ENCODE measurements at regions of chr19 and their contacts with region 1.

Region 1: GRCh38 chr19:47514869-47515588 is at the start of gene NAPA:
- DNase-seq: peak; percentile 100
- ATAC-seq: peak; percentile 84 to 91
- H3K4me3 ChIP-seq: peak within 1 kb of the TSS; percentile 83 to 98 (median 95)
- H3K27ac ChIP-seq: peak within 1 kb of the TSS; percentile 96 to 100 (median 99)
- H3K4me1 ChIP-seq: peaks cover 43 to 48% of the 10 kb centered on the region in 2 donors
- H3K27me3 ChIP-seq: no peaks in the 10 kb centered on the region
- CTCF ChIP-seq: no peak
- POLR2A ChIP-seq: peak; percentile 99 to 100
- total RNA-seq, gene NAPA: 127 to 272 (median 212) TPM

Region 2: DNA sequence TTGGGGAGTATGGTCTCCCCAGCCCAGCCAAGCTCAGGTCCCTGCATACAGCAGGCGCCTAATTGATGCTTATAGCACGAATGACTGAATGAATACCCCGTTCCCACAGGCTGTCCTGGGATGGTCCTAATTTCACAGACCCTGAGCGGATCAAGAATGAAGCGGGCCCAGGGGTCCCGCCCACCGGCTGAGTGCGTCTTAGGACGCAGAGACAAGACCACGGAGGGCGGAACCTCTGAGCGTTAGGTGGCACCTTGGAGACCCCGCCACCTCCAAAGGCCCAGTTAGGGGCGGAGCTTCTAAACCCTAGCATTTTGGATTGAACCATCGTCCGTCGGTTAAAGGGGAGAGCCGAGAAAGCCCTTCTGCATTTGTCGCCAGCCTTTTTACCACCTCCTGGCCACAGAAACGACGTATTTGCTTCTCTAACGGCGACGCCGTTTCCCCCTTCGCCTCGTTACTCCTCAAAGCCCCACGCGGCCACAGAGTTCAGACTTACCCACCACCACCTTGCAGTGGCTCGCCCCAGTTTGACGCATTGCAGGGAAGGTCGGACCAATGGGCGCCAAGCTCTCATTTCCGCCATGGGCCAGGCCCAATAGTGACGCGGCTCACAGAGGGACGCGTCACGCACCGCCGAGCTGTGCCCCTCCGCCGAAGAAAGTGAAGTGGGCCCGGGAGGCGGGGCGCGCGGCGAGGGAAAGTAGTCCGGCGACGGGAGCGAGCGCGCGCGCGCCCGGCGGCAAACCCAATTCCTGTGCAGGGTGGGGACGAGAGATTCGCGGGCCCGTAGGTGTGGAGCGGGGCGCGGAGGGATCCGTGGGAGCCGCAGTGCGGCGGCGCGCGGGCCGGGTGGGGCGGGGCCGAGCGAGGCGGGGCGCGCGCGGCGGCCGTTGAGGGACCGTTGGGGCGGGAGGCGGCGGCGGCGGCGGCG is 914.4 kb before region 1 on chr19:
- in situ Hi-C with region 1: no loop called
- intact Hi-C with region 1: loop called (anchors 5 kb)
- DNase-seq: peak; percentile 94 to 97
- ATAC-seq: peak; percentile 92 to 95
- H3K4me3 ChIP-seq: peak overlapping the region; percentile 90 to 99 (median 94)
- H3K27ac ChIP-seq: peak overlapping the region; percentile 86 to 98 (median 96)
- H3K4me1 ChIP-seq: peaks cover 35 to 41% of the 10 kb centered on the region in 2 donors
- H3K27me3 ChIP-seq: no peaks in the 10 kb centered on the region
- CTCF ChIP-seq: peak in 1 of 5 experiments; percentile 49
- POLR2A ChIP-seq: peak; percentile 7 to 24

Region 3: DNA sequence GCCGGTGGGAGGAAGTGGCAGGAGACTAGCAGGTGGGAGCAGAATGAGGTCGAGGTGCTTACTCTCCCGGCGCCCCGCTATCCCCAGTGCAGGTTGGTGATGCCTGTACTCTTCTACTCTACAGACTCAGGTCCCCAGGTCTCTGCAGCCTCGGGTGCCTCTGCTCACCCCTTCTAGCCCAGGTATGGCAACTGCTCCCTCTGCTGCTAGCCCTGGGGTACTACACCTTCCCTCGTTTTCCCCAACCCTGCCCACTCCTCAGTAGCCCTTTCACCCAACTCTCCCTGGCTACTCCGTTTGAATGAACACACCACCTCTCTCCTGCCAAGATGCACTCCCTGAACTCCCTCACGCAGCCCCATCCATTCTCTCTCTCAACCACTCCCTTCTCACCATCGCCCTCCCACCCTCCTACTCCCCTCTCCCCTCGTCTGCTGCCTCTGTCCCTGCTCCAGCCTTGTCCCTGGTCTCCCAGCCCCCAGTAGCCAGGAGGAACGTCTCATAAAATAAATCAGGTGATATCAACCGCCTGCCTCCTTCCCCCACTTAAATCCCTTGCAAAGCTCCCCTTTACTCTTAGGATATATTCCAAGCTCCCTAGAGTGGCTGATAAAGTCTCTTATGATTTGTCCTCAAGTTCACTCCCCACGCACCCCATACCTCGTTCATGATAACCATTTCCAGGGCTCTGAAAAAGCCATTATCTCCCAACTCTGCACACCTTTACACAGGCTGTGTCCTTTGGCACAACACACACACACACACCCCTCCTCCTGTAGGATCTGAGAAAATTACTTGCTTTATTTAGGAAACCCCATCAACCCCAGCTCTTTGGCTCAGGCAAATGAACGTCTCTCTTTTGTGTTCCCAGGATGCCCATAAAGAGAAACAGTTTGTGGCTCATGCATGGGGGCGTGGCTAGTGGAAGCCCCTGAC is 87.5 kb before region 1 on chr19:
- in situ Hi-C with region 1: loop called in 1 of 4 experiments (anchors 5 kb)
- intact Hi-C with region 1: no loop called
- DNase-seq: peak in 1 of 2 donors; percentile 24
- ATAC-seq: peak; percentile 65 to 70
- H3K4me3 ChIP-seq: no peak overlapping the region
- H3K27ac ChIP-seq: no peak overlapping the region
- H3K4me1 ChIP-seq: peaks cover 11 to 22% of the 10 kb centered on the region in 2 donors
- H3K27me3 ChIP-seq: peaks cover 65 to 82% (median 66%) of the 10 kb centered on the region in 3 donors
- CTCF ChIP-seq: peak; percentile 64 to 82 (median 74)
- POLR2A ChIP-seq: no peak

Region 4: DNA sequence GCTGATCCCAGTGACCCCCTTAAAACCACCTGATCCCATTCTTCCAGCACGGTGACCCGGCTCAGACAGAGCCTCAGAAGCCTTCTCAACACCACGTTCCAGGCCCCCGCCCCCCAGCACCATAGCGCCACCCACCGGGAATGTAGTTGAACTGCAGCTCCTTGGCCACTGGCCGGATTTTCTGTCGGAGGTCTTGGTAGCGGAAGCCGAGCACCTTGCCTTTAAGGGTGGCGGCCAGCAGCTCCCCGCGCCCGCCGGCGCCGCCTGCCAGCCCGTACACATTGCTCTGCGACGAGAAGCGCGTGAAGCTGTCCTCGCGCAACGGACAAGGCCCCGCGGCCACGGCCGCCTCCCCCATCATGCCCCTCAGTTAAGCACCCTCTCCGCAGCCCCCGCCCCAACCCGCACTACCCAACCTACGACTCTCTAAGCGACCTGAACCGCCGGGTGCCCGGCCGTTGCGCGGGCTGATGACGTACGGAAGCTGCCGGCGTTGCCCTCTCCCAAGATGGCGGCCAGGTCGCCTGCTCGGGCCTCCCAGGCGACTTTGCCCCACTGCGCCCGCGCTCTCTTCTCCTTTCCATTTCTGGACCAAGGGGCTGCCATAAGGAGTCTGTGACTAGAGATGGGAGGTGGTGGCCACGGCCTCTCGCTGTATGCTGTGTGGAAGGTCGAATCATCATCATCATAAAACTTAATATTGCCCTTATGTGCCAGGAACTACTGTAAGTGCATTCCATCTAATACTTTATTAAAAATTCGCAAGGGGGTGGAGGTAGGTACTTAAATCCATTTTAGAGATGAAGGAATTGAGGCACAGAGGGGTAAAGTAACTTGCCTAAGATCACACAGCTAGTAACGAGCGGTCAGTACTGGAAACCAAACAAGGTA is 31.0 kb before region 1 on chr19 and contains the start of gene KPTN:
- in situ Hi-C with region 1: no loop called
- intact Hi-C with region 1: loop called (anchors 1 kb)
- DNase-seq: peak; percentile 71 to 88
- ATAC-seq: peak; percentile 92 to 94
- H3K4me3 ChIP-seq: peak within 1 kb of the TSS; percentile 67 to 89 (median 79)
- H3K27ac ChIP-seq: peak within 1 kb of the TSS; percentile 89 to 95 (median 92)
- H3K4me1 ChIP-seq: peaks cover 0 to 5% of the 10 kb centered on the region in 2 donors
- H3K27me3 ChIP-seq: no peaks in the 10 kb centered on the region
- CTCF ChIP-seq: peak; percentile 67 to 95 (median 91)
- POLR2A ChIP-seq: no peak
- total RNA-seq, gene KPTN: 0.91 to 6.4 (median 3.9) TPM

Region 5: GRCh38 chr19:47608074-47608918 is 93.3 kb after region 1 on chr19:
- in situ Hi-C with region 1: no loop called
- intact Hi-C with region 1: loop called (anchors 1 kb)
- DNase-seq: peak; percentile 90 to 94
- ATAC-seq: peak; percentile 80 to 83
- H3K4me3 ChIP-seq: peak overlapping the region; percentile 77 to 100 (median 96)
- H3K27ac ChIP-seq: peak overlapping the region; percentile 92 to 100 (median 99)
- H3K4me1 ChIP-seq: peaks cover 33 to 41% of the 10 kb centered on the region in 2 donors
- H3K27me3 ChIP-seq: no peaks in the 10 kb centered on the region
- CTCF ChIP-seq: peak; percentile 31 to 59 (median 48)
- POLR2A ChIP-seq: peak; percentile 93 to 96

Region 6: DNA sequence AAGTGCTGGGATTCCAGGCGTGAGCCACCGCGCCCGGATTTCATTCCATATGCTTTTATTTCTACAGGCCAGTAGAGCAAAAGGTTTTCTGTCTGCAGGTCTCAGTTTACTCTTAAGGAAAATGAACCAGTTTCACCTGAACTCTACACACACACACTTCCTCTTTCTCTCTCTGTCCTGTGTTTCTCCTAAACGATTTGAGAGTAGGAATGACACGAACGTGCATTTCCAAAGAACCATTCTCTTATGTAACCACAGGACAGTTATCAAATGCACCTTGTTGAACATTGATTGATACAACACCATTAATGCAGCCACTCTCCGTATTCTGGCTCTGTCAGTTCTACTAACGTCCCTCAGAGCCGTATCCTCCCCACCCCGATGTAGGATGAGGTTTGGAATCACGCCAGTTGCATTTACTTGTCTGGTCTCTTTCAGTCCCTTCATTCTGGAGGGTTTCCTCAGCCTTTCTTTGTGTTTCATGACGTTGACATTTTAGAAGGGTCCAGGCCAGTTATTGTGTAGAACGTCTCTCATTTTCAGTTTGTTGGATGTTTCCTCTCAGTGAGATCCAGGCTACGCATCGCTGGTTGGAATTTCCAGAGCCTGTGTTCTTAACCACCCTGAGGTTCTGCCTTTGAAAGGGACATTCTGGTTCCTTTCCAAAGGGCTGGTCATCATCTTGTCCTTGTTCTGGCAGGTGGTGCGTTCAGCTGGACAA is 129.9 kb after region 1 on chr19:
- in situ Hi-C with region 1: no loop called
- intact Hi-C with region 1: no loop called
- DNase-seq: no peak
- ATAC-seq: no peak
- H3K4me3 ChIP-seq: no peak overlapping the region
- H3K27ac ChIP-seq: peak overlapping the region in 3 of 4 donors; percentile 6 to 54 (median 19)
- H3K4me1 ChIP-seq: peaks cover 38 to 49% of the 10 kb centered on the region in 2 donors
- H3K27me3 ChIP-seq: no peaks in the 10 kb centered on the region
- CTCF ChIP-seq: no peak
- POLR2A ChIP-seq: no peak

Region 7: DNA sequence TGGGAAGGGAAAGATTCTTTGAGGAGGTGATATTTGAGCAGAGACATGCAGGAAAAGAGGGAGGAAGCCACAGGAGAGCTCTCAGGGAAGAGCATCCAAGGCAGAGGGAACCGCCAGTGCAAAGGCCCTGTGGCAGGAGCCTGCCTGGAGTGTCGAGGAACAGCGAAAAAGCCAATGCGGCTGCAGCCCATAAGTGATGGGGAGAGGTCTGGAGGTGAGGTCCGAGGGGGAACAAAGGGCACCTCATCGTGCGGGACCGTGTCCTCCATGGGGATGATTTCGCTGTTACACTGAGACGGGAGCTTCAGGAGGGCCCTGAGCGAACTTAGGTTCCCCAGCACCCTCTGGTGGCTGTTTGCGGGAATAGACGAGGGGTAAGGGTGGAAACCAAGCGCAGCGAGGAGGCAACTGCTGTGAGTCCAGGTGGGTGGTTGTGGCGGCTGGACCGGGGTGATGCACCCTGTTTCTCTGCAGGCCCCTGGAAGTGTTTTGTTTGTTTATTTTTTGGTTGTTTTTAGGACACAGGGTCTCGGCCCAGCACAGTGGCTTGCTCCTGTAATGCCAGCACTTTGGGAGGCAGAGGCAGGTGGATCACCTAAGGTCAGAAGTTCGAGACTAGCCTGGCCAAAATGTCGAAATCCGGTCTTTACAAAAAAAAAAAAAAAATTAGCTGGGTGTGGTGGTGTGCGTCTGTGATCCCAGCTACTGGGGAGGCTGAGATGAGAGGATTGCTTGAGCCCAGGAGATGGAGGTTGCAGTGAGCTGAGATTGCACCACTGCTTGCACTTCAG is 192.3 kb after region 1 on chr19:
- in situ Hi-C with region 1: loop called in 1 of 4 experiments (anchors 10 kb)
- intact Hi-C with region 1: no loop called
- DNase-seq: peak; percentile 36 to 71
- ATAC-seq: peak; percentile 81 to 89
- H3K4me3 ChIP-seq: no peak overlapping the region
- H3K27ac ChIP-seq: no peak overlapping the region
- H3K4me1 ChIP-seq: no peaks in the 10 kb centered on the region
- H3K27me3 ChIP-seq: no peaks in the 10 kb centered on the region
- CTCF ChIP-seq: peak; percentile 77 to 89 (median 87)
- POLR2A ChIP-seq: no peak

Region 8: DNA sequence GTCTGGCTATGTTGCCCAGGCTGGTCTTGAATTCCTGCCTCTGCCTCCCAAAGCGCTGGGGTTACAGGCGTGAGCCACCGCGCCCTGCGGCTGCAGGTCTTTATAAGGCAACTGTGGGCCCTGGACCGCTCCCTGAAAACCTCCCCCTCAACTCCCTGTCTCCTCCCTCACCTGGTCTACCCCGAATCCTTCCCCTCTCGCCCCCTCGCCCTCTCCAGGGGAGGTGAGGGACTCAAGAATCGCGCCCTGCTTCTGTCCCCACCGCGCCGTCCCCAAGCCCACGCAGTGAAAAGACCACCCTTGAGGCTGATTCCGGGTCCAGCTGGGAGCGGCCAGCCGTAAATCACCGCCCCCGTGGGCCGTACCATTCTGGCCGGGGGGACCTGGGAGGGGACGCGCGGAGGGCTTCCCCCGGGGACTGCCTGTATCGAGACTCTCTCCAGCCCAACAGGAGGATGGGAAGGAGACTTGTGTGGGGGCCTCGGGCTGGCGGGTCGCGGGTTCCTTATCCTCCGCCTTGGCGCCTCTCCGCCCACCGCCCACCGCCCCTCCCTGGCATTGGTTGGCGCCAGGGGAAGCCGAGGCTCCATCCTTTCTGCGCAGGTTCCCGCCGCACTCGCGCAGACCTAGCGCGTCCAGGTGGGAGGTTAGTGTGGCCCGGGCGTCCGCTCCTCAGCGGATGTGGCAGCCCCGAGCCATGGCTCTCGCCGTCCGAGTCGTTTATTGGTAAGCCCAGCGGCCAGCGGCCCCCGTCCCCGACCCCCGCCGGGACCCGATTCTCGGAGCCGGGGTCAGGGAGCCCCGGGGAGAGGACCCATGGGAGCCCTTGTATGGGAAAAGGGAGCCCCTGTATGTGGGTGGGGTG is 263.3 kb after region 1 on chr19 and contains the start of gene SELENOW:
- in situ Hi-C with region 1: no loop called
- intact Hi-C with region 1: loop called (anchors 5 kb)
- DNase-seq: peak; percentile 48 to 81
- ATAC-seq: peak; percentile 61 to 68
- H3K4me3 ChIP-seq: peak within 1 kb of the TSS; percentile 74 to 98 (median 90)
- H3K27ac ChIP-seq: peak within 1 kb of the TSS; percentile 93 to 99 (median 95)
- H3K4me1 ChIP-seq: peaks cover 38 to 41% of the 10 kb centered on the region in 2 donors
- H3K27me3 ChIP-seq: no peaks in the 10 kb centered on the region
- CTCF ChIP-seq: peak in 1 of 5 experiments; percentile 19
- POLR2A ChIP-seq: peak; percentile 96 to 98
- total RNA-seq, gene SELENOW: 730 to 1,512 (median 1,402) TPM